Activated CD4-positive, alpha-beta memory T cell treated with anti-CD3 and anti-CD28 coated beads for 36 hours (primary cell): ENCODE measurements at regions of chr6 and their contacts with region 1.

Region 1: GRCh38 chr6:490251-491037 is 98.9 kb downstream of the IRF4 start:
- DNase-seq: peak; percentile 76
- H3K4me3 Mint-ChIP-seq: peak overlapping the region; percentile 62
- H3K27ac Mint-ChIP-seq: peak overlapping the region; percentile 100
- H3K4me1 Mint-ChIP-seq: peaks cover 92% of the 10 kb centered on the region
- H3K27me3 Mint-ChIP-seq: no peaks in the 10 kb centered on the region

Region 2: GRCh38 chr6:408599-409102 is 81.8 kb before region 1 on chr6:
- CTCF ChIA-PET with region 1: no interaction called
- POLR2A ChIA-PET with region 1: interaction called, 24 read pairs
- intact Hi-C with region 1: loop called (anchors 2 kb)
- DNase-seq: no peak
- H3K4me3 Mint-ChIP-seq: peak overlapping the region; percentile 14
- H3K27ac Mint-ChIP-seq: peak overlapping the region; percentile 62
- H3K4me1 Mint-ChIP-seq: peaks cover 66% of the 10 kb centered on the region
- H3K27me3 Mint-ChIP-seq: no peaks in the 10 kb centered on the region

Region 3: DNA sequence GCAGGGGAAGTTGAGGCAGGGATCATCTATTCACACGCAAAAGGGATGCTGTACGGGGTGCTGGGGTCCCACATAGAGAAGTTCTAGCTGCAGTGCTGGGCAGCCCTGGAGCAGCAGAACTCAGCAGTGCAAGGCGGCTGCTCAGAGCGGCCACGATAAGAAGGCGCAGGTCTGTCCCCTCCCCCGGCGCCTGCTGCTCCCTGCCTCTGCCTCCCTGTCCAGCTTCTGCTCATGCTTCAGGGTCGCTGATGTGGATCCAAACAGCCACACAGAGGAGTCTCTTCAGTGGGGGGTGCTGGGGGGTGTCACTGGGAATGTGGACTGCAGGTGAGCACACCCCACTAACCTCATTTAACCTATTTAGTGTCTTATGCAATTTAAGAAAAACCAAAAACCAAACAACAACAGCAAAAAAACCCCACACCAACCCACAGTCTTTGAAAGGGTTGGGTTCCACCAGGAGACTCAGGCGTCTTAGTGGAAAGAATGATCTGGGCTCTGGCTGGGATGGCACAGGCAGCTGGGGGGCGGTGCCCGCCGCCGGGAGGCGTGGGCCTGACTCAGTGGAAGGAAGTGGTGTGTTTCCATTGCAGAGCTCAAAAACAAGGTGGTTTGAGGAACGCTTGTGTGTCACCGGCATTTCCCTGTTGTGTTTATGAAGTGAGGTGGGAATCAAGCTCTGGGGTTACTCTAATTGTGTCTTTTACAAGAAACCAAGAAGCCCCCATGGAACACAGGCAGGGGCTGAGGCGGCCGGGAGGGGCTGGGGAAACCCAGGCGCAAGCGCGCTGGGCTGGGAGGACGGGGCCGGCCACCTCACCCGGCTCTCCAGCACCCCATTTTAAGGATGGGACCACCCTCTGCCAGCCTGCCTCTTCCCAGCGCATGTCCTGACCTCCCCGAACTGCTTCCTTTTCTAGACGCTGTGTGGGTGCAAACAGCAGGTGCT is 43.8 kb before region 1 on chr6:
- CTCF ChIA-PET with region 1: interaction called, 3 read pairs
- POLR2A ChIA-PET with region 1: interaction called, 38 read pairs
- intact Hi-C with region 1: loop called (anchors 1 kb)
- DNase-seq: peak; percentile 97
- H3K4me3 Mint-ChIP-seq: peak overlapping the region; percentile 77
- H3K27ac Mint-ChIP-seq: peak overlapping the region; percentile 97
- H3K4me1 Mint-ChIP-seq: peaks cover 55% of the 10 kb centered on the region
- H3K27me3 Mint-ChIP-seq: peaks cover 1% of the 10 kb centered on the region

Region 4: GRCh38 chr6:506508-506907 is 16.1 kb after region 1 on chr6:
- CTCF ChIA-PET with region 1: interaction called, 7 read pairs
- POLR2A ChIA-PET with region 1: interaction called, 32 read pairs
- intact Hi-C with region 1: loop called (anchors 1 kb)
- DNase-seq: peak; percentile 76
- H3K4me3 Mint-ChIP-seq: peak overlapping the region; percentile 30
- H3K27ac Mint-ChIP-seq: peak overlapping the region; percentile 100
- H3K4me1 Mint-ChIP-seq: peaks cover 95% of the 10 kb centered on the region
- H3K27me3 Mint-ChIP-seq: no peaks in the 10 kb centered on the region

Region 5: DNA sequence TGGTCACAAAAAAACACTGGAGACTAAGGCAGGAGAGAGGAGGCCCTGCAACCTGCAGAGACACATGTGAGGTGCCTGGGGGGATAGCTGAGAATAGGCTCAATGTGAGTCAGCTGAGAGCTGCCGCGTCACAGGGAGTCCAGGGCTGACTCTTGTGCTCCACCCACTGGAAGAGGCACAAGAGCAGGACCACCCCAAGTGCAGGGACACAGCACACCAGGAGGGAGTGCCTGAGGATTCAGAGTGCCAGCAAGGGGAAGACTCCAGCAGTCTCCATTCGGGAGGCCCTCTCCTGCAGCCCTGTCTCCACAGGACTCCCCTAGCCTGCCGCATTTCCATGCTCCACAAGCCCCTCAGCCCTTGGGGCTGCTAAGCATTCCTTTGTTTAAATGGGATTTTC is 61.0 kb after region 1 on chr6:
- CTCF ChIA-PET with region 1: interaction called, 3 read pairs
- POLR2A ChIA-PET with region 1: interaction called, 11 read pairs
- intact Hi-C with region 1: no loop called
- DNase-seq: peak; percentile 68
- H3K4me3 Mint-ChIP-seq: no peak overlapping the region
- H3K27ac Mint-ChIP-seq: peak overlapping the region; percentile 97
- H3K4me1 Mint-ChIP-seq: peaks cover 69% of the 10 kb centered on the region
- H3K27me3 Mint-ChIP-seq: no peaks in the 10 kb centered on the region

Region 6: GRCh38 chr6:683742-684440 is 193.4 kb after region 1 on chr6:
- CTCF ChIA-PET with region 1: no interaction called
- POLR2A ChIA-PET with region 1: no interaction called
- intact Hi-C with region 1: loop called (anchors 2 kb)
- DNase-seq: no peak
- H3K4me3 Mint-ChIP-seq: no peak overlapping the region
- H3K27ac Mint-ChIP-seq: no peak overlapping the region
- H3K4me1 Mint-ChIP-seq: peaks cover 51% of the 10 kb centered on the region
- H3K27me3 Mint-ChIP-seq: no peaks in the 10 kb centered on the region

Region 7: GRCh38 chr6:701700-702479 is 211.4 kb after region 1 on chr6:
- CTCF ChIA-PET with region 1: no interaction called
- POLR2A ChIA-PET with region 1: no interaction called
- intact Hi-C with region 1: no loop called
- DNase-seq: no peak
- H3K4me3 Mint-ChIP-seq: no peak overlapping the region
- H3K27ac Mint-ChIP-seq: no peak overlapping the region
- H3K4me1 Mint-ChIP-seq: no peaks in the 10 kb centered on the region
- H3K27me3 Mint-ChIP-seq: peaks cover 1% of the 10 kb centered on the region